GM12878 (cell line): ENCODE measurements at regions of chr1 and their contacts with region 1.

Region 1: GRCh38 chr1:109397538-109398342 is at the start of gene SORT1:
- DNase-seq: no peak
- ATAC-seq: peak; percentile 96
- H3K4me3 ChIP-seq: peak within 1 kb of the TSS; percentile 55
- H3K27ac ChIP-seq: no peak within 1 kb of the TSS
- H3K4me1 ChIP-seq: peaks cover 3% of the 10 kb centered on the region
- H3K27me3 ChIP-seq: peaks cover 1 to 4% of the 10 kb centered on the region in 2 experiments; a peak in 3 of 4 replicates
- CTCF ChIP-seq: no peak
- EP300 ChIP-seq: no peak
- POLR2A ChIP-seq: peak; percentile 39; the same call in 1 of the 2 replicates
- RAD21 ChIP-seq: no peak
- polyA plus RNA-seq, gene SORT1: 0.06 to 0.16 TPM

Region 2: DNA sequence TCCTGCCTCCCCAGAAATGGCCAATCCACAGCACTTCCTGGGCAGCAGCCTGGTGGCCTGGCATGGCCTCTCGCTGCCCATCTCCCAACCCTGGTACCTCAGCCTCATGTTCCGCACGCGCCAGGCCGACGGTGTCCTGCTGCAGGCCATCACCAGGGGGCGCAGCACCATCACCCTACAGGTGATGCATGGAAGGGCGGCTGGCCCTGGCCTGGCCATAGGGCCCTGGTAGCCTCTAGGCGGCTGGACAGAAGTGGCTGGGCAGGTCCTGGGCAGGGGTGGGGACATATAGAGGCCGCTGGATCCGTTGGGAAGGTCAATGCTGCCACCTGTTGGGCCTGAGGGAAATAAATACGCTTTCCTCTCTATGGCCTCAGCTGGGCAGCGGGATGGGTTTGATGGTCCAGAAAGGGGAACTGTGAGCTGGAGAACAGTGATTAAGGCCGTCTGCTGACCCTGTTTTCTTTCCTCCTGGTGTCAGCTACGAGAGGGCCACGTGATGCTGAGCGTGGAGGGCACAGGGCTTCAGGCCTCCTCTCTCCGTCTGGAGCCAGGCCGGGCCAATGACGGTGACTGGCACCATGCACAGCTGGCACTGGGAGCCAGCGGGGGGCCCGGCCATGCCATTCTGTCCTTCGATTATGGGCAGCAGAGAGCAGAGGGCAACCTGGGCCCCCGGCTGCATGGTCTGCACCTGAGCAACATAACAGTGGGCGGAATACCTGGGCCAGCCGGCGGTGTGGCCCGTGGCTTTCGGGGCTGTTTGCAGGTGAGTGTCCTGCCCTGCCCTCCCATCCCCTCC is 133.9 kb before region 1 on chr1:
- CTCF ChIA-PET with region 1: interaction called, 45 read pairs
- POLR2A ChIA-PET with region 1: no interaction called
- RAD21 ChIA-PET with region 1: interaction called, 5 read pairs
- SMC1A ChIA-PET with region 1: interaction called, 7 read pairs
- in situ Hi-C with region 1: loop called (anchors 5 kb)
- intact Hi-C with region 1: loop called (anchors 1 kb)
- DNase-seq: peak; percentile 8
- ATAC-seq: peak; percentile 97
- H3K4me3 ChIP-seq: no peak overlapping the region
- H3K27ac ChIP-seq: no peak overlapping the region
- H3K4me1 ChIP-seq: no peaks in the 10 kb centered on the region
- H3K27me3 ChIP-seq: no peaks in the 10 kb centered on the region
- CTCF ChIP-seq: peak; percentile 89 to 99 (median 96)
- EP300 ChIP-seq: no peak
- POLR2A ChIP-seq: no peak
- RAD21 ChIP-seq: peak; percentile 73

Region 3: DNA sequence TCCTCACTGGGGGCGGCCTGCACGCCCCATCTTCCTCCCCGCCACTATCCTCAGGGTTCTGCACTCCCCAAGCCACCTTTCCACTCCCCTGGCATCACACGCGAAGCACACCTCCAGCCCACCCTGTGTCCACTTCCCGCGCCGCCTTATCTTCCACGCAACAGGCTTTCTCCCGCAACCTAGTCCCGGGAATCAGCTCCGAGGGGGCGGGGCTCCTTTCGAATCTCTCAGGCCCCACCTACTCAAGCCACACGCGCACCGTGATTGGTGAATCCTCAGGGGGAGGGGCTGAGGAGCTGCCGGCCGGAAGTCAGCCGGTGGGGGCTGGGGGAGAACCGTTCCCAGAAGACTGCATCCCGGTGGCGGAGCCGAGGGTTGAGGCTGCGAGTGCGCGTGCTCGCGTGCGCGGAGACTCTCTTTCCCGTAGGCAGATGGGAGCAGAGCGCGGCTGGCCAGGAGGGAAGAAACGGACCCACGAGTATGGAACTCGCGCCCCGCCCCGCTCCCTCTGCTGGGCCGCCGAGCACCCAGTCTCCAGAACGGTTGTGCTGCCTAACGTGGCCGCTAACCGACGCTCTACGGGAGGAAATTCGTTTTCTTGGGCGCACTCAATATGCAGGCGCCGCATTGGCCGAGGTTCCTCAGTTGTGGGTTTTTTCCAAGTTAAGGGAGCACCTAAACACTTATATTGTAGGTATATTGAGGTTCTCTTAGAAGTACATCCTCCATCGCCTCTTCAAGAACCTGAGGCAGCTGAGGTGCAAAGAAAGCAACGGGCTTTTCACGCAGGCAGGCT is 114.6 kb before region 1 on chr1 and contains the start of gene PSRC1:
- CTCF ChIA-PET with region 1: interaction called, 241 read pairs
- POLR2A ChIA-PET with region 1: no interaction called
- RAD21 ChIA-PET with region 1: interaction called, 87 read pairs
- SMC1A ChIA-PET with region 1: interaction called, 113 read pairs
- in situ Hi-C with region 1: no loop called
- intact Hi-C with region 1: no loop called
- DNase-seq: peak; percentile 62
- ATAC-seq: peak; percentile 99
- H3K4me3 ChIP-seq: peak within 1 kb of the TSS; percentile 86
- H3K27ac ChIP-seq: peak within 1 kb of the TSS; percentile 83
- H3K4me1 ChIP-seq: peaks cover 3% of the 10 kb centered on the region
- H3K27me3 ChIP-seq: no peaks in the 10 kb centered on the region
- CTCF ChIP-seq: peak; percentile 51 to 61 (median 55)
- EP300 ChIP-seq: no peak
- POLR2A ChIP-seq: peak; percentile 87
- RAD21 ChIP-seq: peak; percentile 50
- polyA plus RNA-seq, gene PSRC1: 1.2 to 2.0 TPM

Region 4: DNA sequence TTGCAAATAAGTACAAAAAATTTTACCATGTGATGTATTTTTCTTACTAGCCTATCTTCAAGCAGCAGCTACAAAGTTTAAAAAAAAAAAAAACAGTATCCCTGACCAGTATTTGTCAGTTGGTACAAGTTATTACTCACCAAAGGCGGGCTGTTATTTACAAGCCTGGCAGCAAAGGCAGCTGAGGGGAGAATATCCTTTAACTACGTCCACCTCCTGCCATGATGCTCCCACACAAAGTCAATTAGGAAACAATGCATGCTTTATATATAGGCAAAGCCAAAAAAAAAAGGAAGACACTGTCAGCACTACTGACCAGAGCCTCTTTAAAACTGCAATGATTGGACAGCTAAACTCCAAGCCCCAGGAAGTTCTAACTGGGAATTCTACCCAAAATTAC is 14.8 kb after region 1 on chr1:
- CTCF ChIA-PET with region 1: interaction called, 23 read pairs
- POLR2A ChIA-PET with region 1: no interaction called
- RAD21 ChIA-PET with region 1: interaction called, 3 read pairs
- SMC1A ChIA-PET with region 1: interaction called, 7 read pairs
- in situ Hi-C with region 1: no loop called
- intact Hi-C with region 1: no loop called
- DNase-seq: no peak
- ATAC-seq: no peak
- H3K4me3 ChIP-seq: no peak overlapping the region
- H3K27ac ChIP-seq: no peak overlapping the region
- H3K4me1 ChIP-seq: no peaks in the 10 kb centered on the region
- H3K27me3 ChIP-seq: no peaks in the 10 kb centered on the region
- CTCF ChIP-seq: no peak
- EP300 ChIP-seq: no peak
- POLR2A ChIP-seq: no peak
- RAD21 ChIP-seq: no peak